ENCODE measurements at regions of chr7 and their contacts with region 1.

Region 1: GRCh38 chr7:149005241-149006050 is 22.9 kb downstream of the PDIA4 start:
- DNase-seq: peak in 1 of 2 donors; percentile 89
- H3K4me3 ChIP-seq: no peak overlapping the region
- H3K27ac ChIP-seq: no peak overlapping the region
- H3K4me1 ChIP-seq: no peaks in the 10 kb centered on the region
- H3K27me3 ChIP-seq: no peaks in the 10 kb centered on the region
- CTCF ChIP-seq: peak; percentile 79 to 94 (median 86)

Region 2: DNA sequence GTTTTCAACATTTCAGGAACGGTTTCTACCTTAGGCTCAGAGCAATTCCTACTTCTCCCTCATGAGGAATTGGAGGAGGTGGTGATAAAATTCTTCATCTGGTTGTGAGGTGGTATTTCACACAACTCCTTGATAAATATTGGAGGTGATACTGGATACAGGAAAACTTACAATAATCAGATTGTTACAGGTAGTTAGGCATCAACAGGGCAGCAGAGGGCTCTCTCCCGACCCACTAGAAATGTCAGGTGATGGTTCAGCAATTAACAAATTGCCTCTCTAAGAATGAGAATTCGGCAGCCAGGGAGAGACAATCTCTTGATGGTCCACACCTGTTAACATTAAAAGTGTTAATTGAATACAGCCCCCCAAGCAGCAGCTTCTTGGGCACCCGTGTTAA is 62.4 kb after region 1 on chr7:
- intact Hi-C with region 1: loop called (anchors 1 kb)
- DNase-seq: no peak
- H3K4me3 ChIP-seq: no peak overlapping the region
- H3K27ac ChIP-seq: no peak overlapping the region
- H3K4me1 ChIP-seq: no peaks in the 10 kb centered on the region
- H3K27me3 ChIP-seq: no peaks in the 10 kb centered on the region
- CTCF ChIP-seq: no peak

Region 3: DNA sequence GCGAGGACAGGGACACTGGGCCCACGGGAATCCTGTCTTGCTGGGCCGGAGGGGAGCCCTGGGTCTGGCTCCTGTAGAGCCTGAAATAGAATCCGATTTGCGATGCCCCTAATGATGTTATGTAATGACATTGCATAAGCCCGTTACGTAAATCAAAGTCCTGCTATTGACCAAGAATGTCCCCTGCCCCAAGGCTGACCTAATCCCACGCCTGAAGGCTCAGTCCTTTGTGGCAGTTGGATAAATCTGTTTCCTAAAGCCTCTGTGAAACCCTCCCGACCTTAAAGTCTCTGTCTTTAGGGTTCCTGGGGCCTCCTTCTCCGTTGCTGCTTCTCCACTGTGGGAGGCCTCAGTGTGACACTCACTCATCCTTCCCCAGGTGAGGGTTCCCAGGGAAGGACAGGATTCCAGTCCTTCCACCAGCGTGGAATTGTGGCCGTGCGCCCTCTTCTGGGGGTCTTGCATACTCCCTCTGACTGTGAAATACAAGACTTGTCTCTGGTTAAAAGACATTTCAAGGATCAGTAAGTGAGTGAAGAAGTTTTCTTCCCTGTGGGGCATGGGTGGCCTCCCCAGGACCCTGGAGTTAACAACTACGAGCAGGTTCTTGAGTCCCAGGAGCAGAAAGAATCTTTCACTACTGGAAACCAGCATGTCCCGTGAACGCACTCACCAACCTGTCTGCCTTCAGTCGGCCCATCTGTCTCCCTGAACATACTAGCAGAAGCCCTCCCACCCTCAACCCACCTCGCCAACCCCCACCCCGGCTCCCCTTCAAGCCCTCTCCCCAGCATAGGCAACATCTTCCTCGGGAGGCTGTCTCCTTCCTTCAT is 748.2 kb after region 1 on chr7:
- intact Hi-C with region 1: no loop called
- DNase-seq: no peak
- H3K4me3 ChIP-seq: no peak overlapping the region
- H3K27ac ChIP-seq: no peak overlapping the region
- H3K4me1 ChIP-seq: no peaks in the 10 kb centered on the region
- H3K27me3 ChIP-seq: no peaks in the 10 kb centered on the region
- CTCF ChIP-seq: peak in 2 of 3 experiments; percentile 21 to 45

Measured in ascending aorta (tissue), 2 donors.